ENCODE measurements at regions of chr5 and their contacts with region 1.

Region 1: DNA sequence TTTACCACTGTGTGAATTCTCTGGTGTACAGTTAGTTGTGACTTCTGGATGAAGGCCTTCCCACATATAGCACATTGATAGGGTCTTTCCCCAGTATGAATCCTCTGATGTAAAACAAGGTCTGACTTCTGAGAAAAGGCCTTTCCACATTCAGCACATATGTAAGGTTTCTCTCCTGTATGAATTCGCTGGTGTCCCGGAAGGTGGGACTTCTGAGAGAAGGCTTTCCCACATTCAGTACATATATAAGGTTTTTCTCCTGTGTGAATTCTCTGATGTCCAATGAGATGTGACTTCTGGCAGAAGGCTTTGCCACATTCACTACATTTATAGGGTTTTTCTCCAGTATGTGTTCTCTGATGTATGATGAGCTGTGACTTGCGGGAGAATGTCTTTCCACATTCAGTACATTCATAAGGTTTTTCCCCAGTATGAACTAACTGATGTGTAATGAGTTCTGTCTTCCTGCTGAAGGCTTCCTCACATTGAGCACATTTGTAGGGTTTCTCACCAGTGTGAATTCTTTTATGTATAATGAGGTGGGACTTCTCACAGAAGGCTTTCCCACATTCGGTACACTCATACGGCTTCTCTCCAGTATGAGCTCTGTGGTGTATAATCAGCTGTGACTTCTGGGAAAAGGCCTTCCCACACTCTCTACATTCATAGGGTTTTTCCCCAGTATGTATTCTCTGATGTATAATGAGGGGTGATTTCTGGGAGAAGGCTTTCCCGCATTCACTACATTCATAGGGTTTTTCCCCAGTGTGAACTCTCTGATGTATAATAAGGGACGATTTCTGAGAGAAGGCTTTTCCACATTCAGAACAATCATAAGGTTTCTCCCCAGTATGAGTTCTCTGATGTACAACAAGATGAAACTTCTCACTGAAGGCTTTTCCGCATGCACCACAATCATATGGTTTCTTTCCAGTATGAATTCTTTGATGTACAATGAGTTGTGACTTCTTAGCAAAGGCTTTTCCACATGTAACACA is 9.1 kb downstream of the ZNF300 start:
- DNase-seq: no peak
- ATAC-seq: no peak

Region 2: GRCh38 chr5:150946351-150946905 is 50.7 kb after region 1 on chr5:
- intact Hi-C with region 1: loop called (anchors 10 kb)
- DNase-seq: peak; percentile 89
- ATAC-seq: peak; percentile 99

Region 3: GRCh38 chr5:151509231-151509630 is 613.5 kb after region 1 on chr5:
- intact Hi-C with region 1: no loop called
- DNase-seq: no peak
- ATAC-seq: no peak